Thyroid gland (tissue), 4 donors: ENCODE measurements at regions of chr7 and their contacts with region 1.

Region 1: GRCh38 chr7:100483101-100483721 is 516 bp upstream of the NYAP1 start:
- DNase-seq: peak; percentile 62 to 66
- H3K4me3 ChIP-seq: peak overlapping the region in 2 of 3 donors; percentile 28 to 60
- H3K27ac ChIP-seq: peak overlapping the region in 2 of 3 donors; percentile 7 to 51
- H3K4me1 ChIP-seq: peaks cover 11 to 16% of the 10 kb centered on the region in 2 donors
- H3K27me3 ChIP-seq: no peaks in the 10 kb centered on the region
- CTCF ChIP-seq: peak; percentile 31 to 99 (median 97)
- POLR2A ChIP-seq: no peak

Region 2: GRCh38 chr7:100556541-100556940 is 73.3 kb after region 1 on chr7:
- intact Hi-C with region 1: loop called (anchors 5 kb)
- DNase-seq: no peak
- H3K4me3 ChIP-seq: no peak overlapping the region
- H3K27ac ChIP-seq: no peak overlapping the region
- H3K4me1 ChIP-seq: no peaks in the 10 kb centered on the region
- H3K27me3 ChIP-seq: no peaks in the 10 kb centered on the region
- CTCF ChIP-seq: no peak
- POLR2A ChIP-seq: no peak